Adrenal gland (tissue), 19 donors: ENCODE measurements at regions of chr1 and their contacts with region 1.

Region 1: GRCh38 chr1:54499360-54500106 is 48.5 kb upstream of the ACOT11 start:
- DNase-seq: peak in 2 of 7 donors; percentile 16 to 58
- H3K4me3 ChIP-seq: peak overlapping the region in 1 of 4 donors; percentile 42
- H3K27ac ChIP-seq: no peak overlapping the region
- H3K4me1 ChIP-seq: peaks cover 0 to 11% of the 10 kb centered on the region in 2 donors
- H3K27me3 ChIP-seq: peaks cover 18% of the 10 kb centered on the region
- CTCF ChIP-seq: peak in 3 of 6 experiments; percentile 25 to 34 (median 28)
- POLR2A ChIP-seq: no peak

Region 2: GRCh38 chr1:53945433-53946251 is 553.9 kb before region 1 on chr1 and contains the start of gene IFT25:
- intact Hi-C with region 1: no loop called
- DNase-seq: peak; percentile 96 to 99 (median 97)
- H3K4me3 ChIP-seq: peak within 1 kb of the TSS; percentile 21 to 94 (median 78)
- H3K27ac ChIP-seq: peak within 1 kb of the TSS; percentile 70 to 96 (median 93)
- H3K4me1 ChIP-seq: peaks cover 13 to 43% of the 10 kb centered on the region in 2 donors
- H3K27me3 ChIP-seq: no peaks in the 10 kb centered on the region
- CTCF ChIP-seq: no peak
- POLR2A ChIP-seq: peak; percentile 44 to 87
- total RNA-seq, gene IFT25: 7.2 to 53.1 (median 26.6) TPM

Region 3: GRCh38 chr1:54069791-54070170 is 429.8 kb before region 1 on chr1:
- intact Hi-C with region 1: loop called in 1 of 2 experiments (anchors 10 kb)
- DNase-seq: peak in 1 of 7 donors; percentile 11
- H3K4me3 ChIP-seq: no peak overlapping the region
- H3K27ac ChIP-seq: no peak overlapping the region
- H3K4me1 ChIP-seq: no peaks in the 10 kb centered on the region
- H3K27me3 ChIP-seq: no peaks in the 10 kb centered on the region
- CTCF ChIP-seq: no peak
- POLR2A ChIP-seq: no peak

Region 4: GRCh38 chr1:54310439-54311328 is 188.8 kb before region 1 on chr1:
- intact Hi-C with region 1: loop called in 1 of 2 experiments (anchors 10 kb)
- DNase-seq: peak in 6 of 7 donors; percentile 53 to 82 (median 62)
- H3K4me3 ChIP-seq: no peak overlapping the region
- H3K27ac ChIP-seq: peak overlapping the region in 2 of 5 donors; percentile 77 to 91
- H3K4me1 ChIP-seq: peaks cover 9 to 38% of the 10 kb centered on the region in 2 donors
- H3K27me3 ChIP-seq: no peaks in the 10 kb centered on the region
- CTCF ChIP-seq: peak; percentile 13 to 64 (median 54)
- POLR2A ChIP-seq: no peak

Region 5: DNA sequence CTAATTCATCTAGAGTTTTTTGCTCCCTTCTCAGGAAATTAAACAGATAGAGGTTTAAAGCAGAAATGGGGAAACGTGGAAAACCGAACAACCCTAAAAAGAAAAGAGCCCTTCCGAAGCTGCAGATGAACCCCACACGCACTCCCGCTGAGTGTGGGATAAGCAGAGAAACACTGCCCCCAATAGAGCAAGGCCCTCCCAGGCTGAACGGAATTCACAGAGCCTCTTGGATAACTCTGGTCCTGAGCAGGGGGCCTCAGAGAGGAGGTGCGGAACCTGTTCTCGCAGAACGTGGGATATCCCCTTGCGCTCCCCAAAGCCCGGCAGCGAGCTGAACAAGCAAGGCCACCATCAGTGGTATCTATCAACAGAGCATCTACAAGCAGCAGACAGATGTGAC is 138.2 kb before region 1 on chr1:
- intact Hi-C with region 1: no loop called
- DNase-seq: no peak
- H3K4me3 ChIP-seq: no peak overlapping the region
- H3K27ac ChIP-seq: peak overlapping the region in 1 of 5 donors; percentile 30
- H3K4me1 ChIP-seq: peaks cover 11 to 39% of the 10 kb centered on the region in 2 donors
- H3K27me3 ChIP-seq: no peaks in the 10 kb centered on the region
- CTCF ChIP-seq: no peak
- POLR2A ChIP-seq: no peak

Region 6: DNA sequence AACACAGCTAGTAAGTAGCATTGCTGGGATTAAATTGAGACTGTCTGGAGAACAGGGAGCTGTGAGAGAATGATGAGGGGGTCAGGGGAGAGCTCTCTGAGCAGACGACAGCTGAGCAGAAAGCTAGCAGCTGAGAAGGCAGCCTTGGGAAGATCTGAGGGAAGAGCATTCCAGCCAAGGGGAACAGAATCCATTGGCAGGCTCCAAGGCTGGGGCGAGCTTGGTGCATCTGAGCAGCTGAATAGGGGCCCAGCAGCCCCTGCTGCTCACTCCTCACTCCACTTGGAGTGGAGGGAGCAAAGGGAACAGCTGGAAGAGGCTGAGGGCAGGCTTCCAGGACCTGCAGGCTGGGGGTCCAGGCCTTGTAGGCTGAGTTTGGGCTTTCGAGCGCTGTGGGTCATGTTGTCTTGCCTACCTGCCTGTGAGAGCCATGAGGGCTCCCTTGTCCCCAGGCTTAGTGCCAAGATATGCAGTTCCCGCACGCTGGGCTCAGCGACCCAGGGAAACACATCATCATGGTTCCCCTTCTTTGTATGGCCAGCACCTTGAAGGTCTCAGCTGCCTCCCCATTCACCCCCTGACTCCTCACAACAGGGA is 59.0 kb after region 1 on chr1:
- intact Hi-C with region 1: no loop called
- DNase-seq: peak in 1 of 7 donors; percentile 49
- H3K4me3 ChIP-seq: no peak overlapping the region
- H3K27ac ChIP-seq: no peak overlapping the region
- H3K4me1 ChIP-seq: peaks cover 0 to 4% of the 10 kb centered on the region in 2 donors
- H3K27me3 ChIP-seq: no peaks in the 10 kb centered on the region
- CTCF ChIP-seq: no peak
- POLR2A ChIP-seq: no peak

Region 7: GRCh38 chr1:54705153-54705552 is 205.6 kb after region 1 on chr1:
- intact Hi-C with region 1: no loop called
- DNase-seq: no peak
- H3K4me3 ChIP-seq: no peak overlapping the region
- H3K27ac ChIP-seq: no peak overlapping the region
- H3K4me1 ChIP-seq: no peaks in the 10 kb centered on the region
- H3K27me3 ChIP-seq: no peaks in the 10 kb centered on the region
- CTCF ChIP-seq: no peak
- POLR2A ChIP-seq: no peak

Region 8: DNA sequence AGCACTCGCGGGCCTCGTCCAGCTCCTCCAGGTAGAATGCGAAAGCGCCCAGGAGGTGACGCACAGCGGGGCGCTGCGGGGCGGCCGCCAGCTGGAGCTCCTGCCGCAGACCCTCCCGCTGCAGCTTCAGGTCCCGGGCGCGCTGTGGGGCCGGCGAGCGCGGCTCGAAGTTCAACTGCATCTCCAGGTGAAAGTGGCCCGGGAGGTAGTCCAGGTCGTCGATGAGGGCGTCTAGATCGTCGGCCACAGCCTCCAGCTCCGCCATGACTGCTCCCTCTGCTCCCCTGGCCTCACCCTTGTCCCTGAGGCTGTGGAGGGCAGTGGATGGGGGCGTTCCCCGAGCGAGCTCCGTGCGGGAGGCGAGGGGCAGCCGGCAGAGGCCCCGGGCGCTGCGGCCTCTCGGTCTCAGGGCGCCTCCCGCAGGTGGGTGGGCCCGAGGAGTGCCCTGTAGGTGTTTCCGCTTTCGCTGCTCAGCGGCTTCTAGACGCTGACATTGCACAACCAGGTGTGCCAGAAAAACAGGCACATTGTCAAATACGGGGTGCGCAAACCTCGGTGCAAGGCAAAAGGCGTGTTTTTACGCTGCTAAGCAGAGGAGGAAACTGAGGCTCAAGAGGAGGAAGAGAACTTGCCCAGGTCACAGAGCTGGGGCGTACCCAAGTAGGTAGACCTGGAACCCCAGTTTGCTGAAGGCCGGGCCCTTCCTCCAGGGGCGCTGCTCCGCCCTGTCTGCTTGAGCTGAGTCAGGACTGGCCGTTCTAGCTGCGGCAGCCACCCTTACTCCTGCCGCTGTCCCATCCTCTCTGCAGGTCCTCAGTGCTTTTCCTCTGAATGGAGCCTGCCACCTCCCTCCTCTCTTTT is 301.6 kb after region 1 on chr1 and contains the start of gene TTC22:
- intact Hi-C with region 1: loop called in 1 of 2 experiments (anchors 10 kb)
- DNase-seq: peak in 6 of 7 donors; percentile 36 to 84 (median 48)
- H3K4me3 ChIP-seq: peak within 1 kb of the TSS in 2 of 4 donors; percentile 7 to 48
- H3K27ac ChIP-seq: peak within 1 kb of the TSS in 1 of 5 donors; percentile 61
- H3K4me1 ChIP-seq: peaks cover 10 to 25% of the 10 kb centered on the region in 2 donors
- H3K27me3 ChIP-seq: no peaks in the 10 kb centered on the region
- CTCF ChIP-seq: peak in 5 of 6 experiments; percentile 7 to 45 (median 38)
- POLR2A ChIP-seq: no peak
- total RNA-seq, gene TTC22: 0.09 to 2.3 (median 1.6) TPM